Panc1 (cell line): ENCODE measurements at regions of chr7 and their contacts with region 1.

Region 1: DNA sequence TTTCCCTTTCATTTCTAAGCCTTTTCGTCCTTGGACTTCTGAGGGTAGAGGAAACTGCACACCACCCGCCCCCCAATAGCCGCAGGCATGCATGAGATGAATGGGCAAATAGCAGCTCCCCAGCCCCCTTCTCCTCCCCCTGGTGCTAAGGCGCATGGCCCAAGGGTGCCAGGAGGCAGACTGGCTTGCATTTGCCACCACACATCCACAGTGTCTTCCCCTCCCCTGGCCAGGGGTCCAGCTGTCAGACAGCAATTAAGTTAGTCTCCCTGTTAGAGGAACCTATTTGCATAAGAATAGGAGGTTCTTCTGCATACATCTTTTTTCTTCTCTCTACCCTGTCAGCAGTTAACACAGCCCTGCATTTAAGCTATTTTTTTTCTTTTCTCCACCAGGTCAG is 20.2 kb downstream of the TOMM7 start:
- DNase-seq: no peak
- ATAC-seq: no peak
- H3K4me3 ChIP-seq: no peak overlapping the region
- H3K27ac ChIP-seq: no peak overlapping the region
- H3K4me1 ChIP-seq: no peaks in the 10 kb centered on the region
- H3K27me3 ChIP-seq: no peaks in the 10 kb centered on the region
- CTCF ChIP-seq: no peak

Region 2: GRCh38 chr7:21486511-21486910 is 1315.9 kb before region 1 on chr7:
- CTCF ChIA-PET with region 1: no interaction called
- POLR2A ChIA-PET with region 1: interaction called, 11 read pairs
- in situ Hi-C with region 1: no loop called
- intact Hi-C with region 1: no loop called
- DNase-seq: no peak
- ATAC-seq: no peak
- H3K4me3 ChIP-seq: no peak overlapping the region
- H3K27ac ChIP-seq: no peak overlapping the region
- H3K4me1 ChIP-seq: no peaks in the 10 kb centered on the region
- H3K27me3 ChIP-seq: no peaks in the 10 kb centered on the region
- CTCF ChIP-seq: no peak

Region 3: DNA sequence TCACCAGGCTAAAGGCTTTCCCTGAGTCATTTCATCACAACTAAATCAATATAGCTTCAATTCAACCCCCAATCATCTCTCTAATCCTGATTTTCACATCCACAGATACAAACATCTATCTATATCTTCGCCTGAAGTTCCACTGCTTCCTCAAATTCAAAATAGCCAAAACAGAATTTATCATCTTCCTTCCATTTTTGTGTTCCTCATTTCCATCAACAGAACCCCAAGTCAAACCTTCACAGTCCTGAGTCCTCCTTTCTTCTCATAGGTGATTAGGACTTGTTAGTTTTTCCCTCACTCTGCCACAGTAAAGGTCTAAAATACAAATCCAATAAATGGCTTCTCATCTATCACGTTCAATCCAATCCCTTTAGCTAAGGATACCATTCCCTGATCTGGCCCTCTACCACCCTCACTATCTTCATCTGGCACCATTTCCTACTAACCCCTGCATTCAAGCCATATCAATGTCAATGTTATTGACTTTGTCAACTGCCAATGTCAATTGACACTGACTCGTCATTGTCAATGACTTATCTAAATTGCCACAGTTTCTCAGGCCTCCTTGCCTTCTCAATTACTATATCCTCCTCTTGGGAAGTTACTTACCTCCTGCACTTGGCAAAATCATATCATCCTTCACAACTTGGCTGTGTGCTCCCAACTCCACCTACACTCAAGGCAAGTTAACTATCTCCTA is 208.9 kb after region 1 on chr7:
- CTCF ChIA-PET with region 1: interaction called, 11 read pairs
- POLR2A ChIA-PET with region 1: no interaction called
- in situ Hi-C with region 1: no loop called
- intact Hi-C with region 1: no loop called
- DNase-seq: no peak
- ATAC-seq: no peak
- H3K4me3 ChIP-seq: no peak overlapping the region
- H3K27ac ChIP-seq: no peak overlapping the region; the same call in 1 of the 2 replicates
- H3K4me1 ChIP-seq: peaks cover 16% of the 10 kb centered on the region
- H3K27me3 ChIP-seq: no peaks in the 10 kb centered on the region
- CTCF ChIP-seq: no peak